ENCODE measurements at regions of chr15 and their contacts with region 1.

Region 1: DNA sequence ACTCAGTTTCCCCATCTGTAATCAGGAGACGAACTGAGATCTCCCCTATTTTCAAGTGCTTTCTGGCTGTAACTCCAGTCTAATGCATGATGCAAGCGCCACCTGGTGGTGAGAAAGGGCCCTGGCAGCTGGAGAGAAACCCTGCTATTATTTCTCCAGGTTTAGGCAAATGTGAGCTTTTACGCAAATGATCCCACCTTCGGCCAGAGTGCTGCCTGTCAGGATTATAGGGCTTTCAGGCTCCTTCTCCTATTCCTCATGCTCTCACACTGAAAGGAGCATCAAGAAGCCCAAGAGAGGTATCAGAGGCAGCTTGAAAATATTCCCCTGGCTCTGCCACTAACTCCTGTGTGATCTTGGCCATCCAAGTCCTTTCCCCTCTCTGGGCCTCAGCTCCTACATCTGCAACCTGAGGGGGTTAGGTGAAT is 93.9 kb upstream of the RASGRF1 start:
- DNase-seq: peak; percentile 83
- H3K4me3 Mint-ChIP-seq: no peak overlapping the region
- H3K27ac Mint-ChIP-seq: no peak overlapping the region
- H3K4me1 Mint-ChIP-seq: no peaks in the 10 kb centered on the region
- H3K27me3 Mint-ChIP-seq: peaks cover 12% of the 10 kb centered on the region

Region 2: GRCh38 chr15:78750566-78750965 is 433.9 kb before region 1 on chr15:
- CTCF ChIA-PET with region 1: no interaction called
- intact Hi-C with region 1: loop called (anchors 10 kb)
- DNase-seq: peak; percentile 1
- H3K4me3 Mint-ChIP-seq: peak overlapping the region; percentile 51
- H3K27ac Mint-ChIP-seq: no peak overlapping the region
- H3K4me1 Mint-ChIP-seq: peaks cover 5% of the 10 kb centered on the region
- H3K27me3 Mint-ChIP-seq: no peaks in the 10 kb centered on the region

Region 3: GRCh38 chr15:78909791-78910228 is 274.7 kb before region 1 on chr15:
- CTCF ChIA-PET with region 1: interaction called, 16 read pairs
- intact Hi-C with region 1: no loop called
- DNase-seq: peak; percentile 31
- H3K4me3 Mint-ChIP-seq: no peak overlapping the region
- H3K27ac Mint-ChIP-seq: no peak overlapping the region
- H3K4me1 Mint-ChIP-seq: peaks cover 13% of the 10 kb centered on the region
- H3K27me3 Mint-ChIP-seq: no peaks in the 10 kb centered on the region

Region 4: GRCh38 chr15:79028411-79028964 is 156.0 kb before region 1 on chr15:
- CTCF ChIA-PET with region 1: interaction called, 68 read pairs
- intact Hi-C with region 1: loop called (anchors 1 kb)
- DNase-seq: peak; percentile 61
- H3K4me3 Mint-ChIP-seq: no peak overlapping the region
- H3K27ac Mint-ChIP-seq: no peak overlapping the region
- H3K4me1 Mint-ChIP-seq: no peaks in the 10 kb centered on the region
- H3K27me3 Mint-ChIP-seq: peaks cover 7% of the 10 kb centered on the region

Region 5: DNA sequence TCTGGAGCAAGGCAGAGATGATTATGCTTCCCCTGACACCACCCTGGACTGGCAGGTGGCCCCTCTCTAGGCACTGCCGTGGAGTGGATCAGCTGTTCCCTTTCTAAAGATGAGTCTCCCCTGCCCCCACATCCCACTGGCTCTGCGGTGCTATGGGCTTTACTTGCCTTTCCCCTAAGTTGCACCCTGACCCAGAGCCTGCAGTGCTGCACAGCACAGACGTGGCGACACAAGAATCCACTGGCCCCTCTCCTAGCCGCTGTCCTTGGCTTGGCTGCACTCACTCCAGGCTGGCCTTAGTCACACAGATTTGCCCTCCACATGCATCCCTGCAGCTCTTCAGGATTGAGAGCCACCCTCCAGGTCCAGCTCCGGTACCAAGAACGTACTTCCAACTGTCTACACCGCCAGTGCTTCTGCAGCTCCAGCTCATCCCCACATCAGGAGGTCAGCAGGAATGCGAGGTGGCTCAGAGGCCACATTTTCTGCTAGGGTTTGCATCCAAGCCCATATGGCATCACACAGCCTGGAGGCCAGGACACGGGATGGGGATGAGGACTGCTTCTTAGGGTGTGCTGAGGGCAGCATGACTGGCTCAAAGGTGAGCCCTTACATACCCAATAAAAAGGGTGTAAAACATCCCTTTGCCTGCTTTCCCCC is 11.5 kb before region 1 on chr15:
- CTCF ChIA-PET with region 1: interaction called, 21 read pairs
- intact Hi-C with region 1: no loop called
- DNase-seq: no peak
- H3K4me3 Mint-ChIP-seq: no peak overlapping the region
- H3K27ac Mint-ChIP-seq: no peak overlapping the region
- H3K4me1 Mint-ChIP-seq: no peaks in the 10 kb centered on the region
- H3K27me3 Mint-ChIP-seq: peaks cover 21% of the 10 kb centered on the region

Region 6: DNA sequence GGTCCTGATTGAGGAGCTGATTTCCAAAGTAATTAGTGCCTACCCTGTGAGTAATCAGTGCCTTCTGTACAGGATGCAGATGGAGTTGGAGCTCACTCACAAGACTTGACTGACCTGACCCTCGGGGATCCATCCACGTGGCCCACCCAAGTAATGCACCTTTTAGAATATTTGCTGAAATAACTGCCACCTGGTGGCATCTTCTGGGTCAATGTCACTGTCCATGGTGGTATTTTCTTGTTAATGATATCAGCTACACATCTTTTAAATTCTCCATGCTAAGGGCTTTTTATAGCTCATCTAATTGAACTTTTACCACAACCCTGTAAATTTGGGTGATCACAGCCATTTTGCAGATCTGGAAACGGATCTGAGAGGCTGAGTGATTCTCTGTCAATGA is 23.7 kb after region 1 on chr15:
- CTCF ChIA-PET with region 1: interaction called, 27 read pairs
- intact Hi-C with region 1: no loop called
- DNase-seq: no peak
- H3K4me3 Mint-ChIP-seq: no peak overlapping the region
- H3K27ac Mint-ChIP-seq: no peak overlapping the region
- H3K4me1 Mint-ChIP-seq: no peaks in the 10 kb centered on the region
- H3K27me3 Mint-ChIP-seq: peaks cover 30% of the 10 kb centered on the region